OCI-LY7 (cell line): ENCODE measurements at regions of chr17 and their contacts with region 1.

Region 1: DNA sequence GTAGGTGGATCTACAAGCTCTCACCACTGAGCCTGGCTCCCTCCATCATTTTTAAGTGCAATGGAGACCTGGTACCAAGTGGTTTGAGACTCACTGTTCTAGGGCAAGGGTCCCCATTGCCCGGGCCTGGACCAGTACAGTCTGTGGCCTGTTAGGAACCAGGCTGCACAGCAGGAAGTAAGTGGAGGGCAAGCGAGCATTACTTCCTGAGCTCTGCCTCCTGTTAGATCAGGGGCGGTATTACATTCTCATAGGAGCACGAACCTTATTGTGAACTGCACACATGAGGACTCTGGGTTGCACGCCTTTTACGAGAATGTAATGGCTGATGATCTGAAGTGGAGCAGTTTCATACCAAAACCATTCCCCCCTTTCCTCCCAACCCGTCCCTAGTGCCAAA is 6.8 kb upstream of the ZNF594 start:
- DNase-seq: peak; percentile 82
- H3K4me3 ChIP-seq: no peak overlapping the region
- H3K27ac ChIP-seq: peak overlapping the region; percentile 58
- H3K4me1 ChIP-seq: peaks cover 39% of the 10 kb centered on the region
- CTCF ChIP-seq: no peak; the same call in 1 of the 2 replicates

Region 2: DNA sequence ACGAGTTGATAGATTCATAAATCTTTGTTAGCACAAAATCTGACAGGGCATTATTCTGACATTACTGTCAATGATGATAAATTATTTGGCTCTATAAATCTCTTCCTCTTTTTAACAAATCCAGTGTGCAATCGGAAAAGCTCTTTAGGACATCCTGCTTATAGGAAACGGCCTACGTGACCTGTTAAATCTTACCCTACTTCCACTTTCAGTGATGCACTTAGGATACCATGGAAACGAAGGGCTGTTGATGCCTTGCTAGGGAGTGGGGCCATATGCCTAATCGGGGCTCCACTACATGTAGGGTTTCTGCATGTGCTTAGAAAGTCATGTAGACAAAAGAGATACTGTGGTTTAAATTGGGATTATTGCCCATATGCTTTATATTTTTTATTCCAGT is 34.0 kb before region 1 on chr17:
- CTCF ChIA-PET with region 1: no interaction called
- POLR2A ChIA-PET with region 1: no interaction called
- intact Hi-C with region 1: no loop called
- DNase-seq: no peak
- H3K4me3 ChIP-seq: no peak overlapping the region
- H3K27ac ChIP-seq: no peak overlapping the region
- H3K4me1 ChIP-seq: peaks cover 6% of the 10 kb centered on the region
- CTCF ChIP-seq: no peak

Region 3: GRCh38 chr17:5210614-5211252 is 12.3 kb after region 1 on chr17:
- CTCF ChIA-PET with region 1: interaction called, 3 read pairs
- POLR2A ChIA-PET with region 1: interaction called, 20 read pairs
- intact Hi-C with region 1: loop called (anchors 1 kb)
- DNase-seq: peak; percentile 72
- H3K4me3 ChIP-seq: peak overlapping the region; percentile 40
- H3K27ac ChIP-seq: peak overlapping the region; percentile 85
- H3K4me1 ChIP-seq: peaks cover 47% of the 10 kb centered on the region
- CTCF ChIP-seq: no peak

Region 4: GRCh38 chr17:5438716-5439445 is 240.4 kb after region 1 on chr17 and contains the start of gene C1QBP:
- CTCF ChIA-PET with region 1: no interaction called
- POLR2A ChIA-PET with region 1: no interaction called
- intact Hi-C with region 1: loop called (anchors 5 kb)
- DNase-seq: peak; percentile 96
- H3K4me3 ChIP-seq: peak within 1 kb of the TSS; percentile 84
- H3K27ac ChIP-seq: peak within 1 kb of the TSS; percentile 58
- H3K4me1 ChIP-seq: peaks cover 27% of the 10 kb centered on the region
- CTCF ChIP-seq: peak; percentile 94
- total RNA-seq, gene C1QBP: 257 and 260 TPM in 2 replicates